Heart right ventricle (tissue), 16 donors: ENCODE measurements at regions of chr3 and their contacts with region 1.

Region 1: GRCh38 chr3:131907796-131908195 is 127.0 kb downstream of the CPNE4 start:
- DNase-seq: no peak
- ATAC-seq: no peak
- H3K4me3 ChIP-seq: no peak overlapping the region
- H3K27ac ChIP-seq: no peak overlapping the region
- H3K4me1 ChIP-seq: no peaks in the 10 kb centered on the region
- H3K27me3 ChIP-seq: peaks cover 0 to 11% (median 0%) of the 10 kb centered on the region in 7 donors
- CTCF ChIP-seq: no peak

Region 2: GRCh38 chr3:131892331-131892730 is 15.5 kb before region 1 on chr3:
- intact Hi-C with region 1: loop called in 1 of 10 experiments (anchors 1 kb)
- DNase-seq: no peak
- ATAC-seq: no peak
- H3K4me3 ChIP-seq: no peak overlapping the region
- H3K27ac ChIP-seq: no peak overlapping the region
- H3K4me1 ChIP-seq: no peaks in the 10 kb centered on the region
- H3K27me3 ChIP-seq: peaks cover 0 to 2% (median 0%) of the 10 kb centered on the region in 7 donors
- CTCF ChIP-seq: no peak

Region 3: GRCh38 chr3:132064114-132064513 is 156.3 kb after region 1 on chr3:
- intact Hi-C with region 1: no loop called
- DNase-seq: no peak
- ATAC-seq: no peak
- H3K4me3 ChIP-seq: no peak overlapping the region
- H3K27ac ChIP-seq: no peak overlapping the region
- H3K4me1 ChIP-seq: no peaks in the 10 kb centered on the region
- H3K27me3 ChIP-seq: peaks cover 0 to 8% (median 3%) of the 10 kb centered on the region in 7 donors
- CTCF ChIP-seq: no peak